MCF 10A (cell line): ENCODE measurements at regions of chr1 and their contacts with region 1.

Region 1: GRCh38 chr1:78617615-78618026 is 2.6 kb upstream of the IFI44L start:
- DNase-seq: peak; percentile 88
- H3K4me3 Mint-ChIP-seq: no peak overlapping the region
- H3K27ac Mint-ChIP-seq: no peak overlapping the region
- H3K4me1 Mint-ChIP-seq: peaks cover 22% of the 10 kb centered on the region
- H3K27me3 Mint-ChIP-seq: no peaks in the 10 kb centered on the region
- CTCF ChIP-seq: peak; percentile 82

Region 2: GRCh38 chr1:78132174-78132947 is 485.3 kb before region 1 on chr1:
- CTCF ChIA-PET with region 1: interaction called, 12 read pairs
- POLR2A ChIA-PET with region 1: interaction called, 7 read pairs
- intact Hi-C with region 1: no loop called
- DNase-seq: no peak
- H3K4me3 Mint-ChIP-seq: no peak overlapping the region
- H3K27ac Mint-ChIP-seq: no peak overlapping the region
- H3K4me1 Mint-ChIP-seq: no peaks in the 10 kb centered on the region
- H3K27me3 Mint-ChIP-seq: no peaks in the 10 kb centered on the region
- CTCF ChIP-seq: no peak

Region 3: GRCh38 chr1:78649628-78650027 is 32.0 kb after region 1 on chr1 and contains the start of gene IFI44:
- CTCF ChIA-PET with region 1: interaction called, 3 read pairs
- POLR2A ChIA-PET with region 1: interaction called, 19 read pairs
- intact Hi-C with region 1: no loop called
- DNase-seq: peak; percentile 81
- H3K4me3 Mint-ChIP-seq: no peak within 1 kb of the TSS
- H3K27ac Mint-ChIP-seq: no peak within 1 kb of the TSS
- H3K4me1 Mint-ChIP-seq: no peaks in the 10 kb centered on the region
- H3K27me3 Mint-ChIP-seq: no peaks in the 10 kb centered on the region
- CTCF ChIP-seq: no peak
- total RNA-seq, gene IFI44: 7.5 and 7.7 TPM in 2 replicates

Region 4: DNA sequence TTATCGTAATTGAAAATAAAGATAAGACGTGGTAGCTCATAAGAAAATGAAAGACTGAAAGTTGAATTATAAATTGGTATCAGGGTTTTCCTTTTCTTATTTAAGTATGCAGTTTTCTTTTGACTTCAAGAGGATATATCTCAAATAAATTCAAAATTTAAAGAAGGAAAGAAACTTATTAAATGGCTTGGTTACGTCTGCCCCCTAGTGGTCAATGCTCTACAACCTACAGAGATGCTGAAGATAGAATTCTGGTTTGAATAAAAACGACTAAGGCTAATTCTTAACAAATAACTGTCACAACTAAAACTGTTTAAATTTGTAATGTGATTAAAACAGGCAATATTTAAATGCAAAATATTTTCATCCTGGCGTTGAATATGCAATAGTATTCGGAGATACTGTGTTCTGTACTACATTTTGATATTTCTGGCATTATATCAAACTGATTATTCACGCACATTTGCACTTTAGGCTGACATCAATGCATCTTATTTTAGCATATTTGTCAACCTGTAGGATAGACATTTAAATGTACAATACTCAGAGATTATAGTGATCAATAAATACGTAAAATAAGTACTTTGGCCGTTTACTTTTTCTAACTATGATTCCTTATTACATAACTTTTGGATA is 58.8 kb after region 1 on chr1:
- CTCF ChIA-PET with region 1: interaction called, 56 read pairs
- POLR2A ChIA-PET with region 1: interaction called, 21 read pairs
- intact Hi-C with region 1: loop called (anchors 1 kb)
- DNase-seq: peak; percentile 76
- H3K4me3 Mint-ChIP-seq: no peak overlapping the region
- H3K27ac Mint-ChIP-seq: no peak overlapping the region
- H3K4me1 Mint-ChIP-seq: no peaks in the 10 kb centered on the region
- H3K27me3 Mint-ChIP-seq: no peaks in the 10 kb centered on the region
- CTCF ChIP-seq: peak; percentile 71

Region 5: DNA sequence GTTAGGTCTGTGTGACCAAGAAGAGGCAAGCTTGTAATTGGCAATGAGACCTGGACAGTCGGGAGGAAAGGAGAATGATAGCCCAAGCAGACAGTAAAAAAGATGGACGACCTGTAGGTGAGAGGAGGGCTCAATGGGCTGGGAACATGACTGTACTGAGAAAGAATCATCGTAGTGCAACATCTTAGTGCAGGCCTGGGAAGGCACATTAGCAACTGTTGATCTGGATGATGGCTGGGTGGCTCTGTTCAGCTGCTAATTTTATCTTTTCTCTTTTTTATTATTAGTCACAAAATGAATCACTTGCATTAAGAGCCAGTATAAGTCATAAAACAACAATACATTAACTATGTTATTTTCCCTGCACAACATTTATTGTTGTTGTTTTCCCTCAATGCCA is 64.9 kb after region 1 on chr1:
- CTCF ChIA-PET with region 1: interaction called, 29 read pairs
- POLR2A ChIA-PET with region 1: interaction called, 4 read pairs
- intact Hi-C with region 1: no loop called
- DNase-seq: no peak
- H3K4me3 Mint-ChIP-seq: no peak overlapping the region
- H3K27ac Mint-ChIP-seq: no peak overlapping the region
- H3K4me1 Mint-ChIP-seq: no peaks in the 10 kb centered on the region
- H3K27me3 Mint-ChIP-seq: no peaks in the 10 kb centered on the region
- CTCF ChIP-seq: no peak

Region 6: GRCh38 chr1:78831731-78832360 is 214.2 kb after region 1 on chr1:
- CTCF ChIA-PET with region 1: interaction called, 5 read pairs
- POLR2A ChIA-PET with region 1: no interaction called
- intact Hi-C with region 1: loop called (anchors 2 kb)
- DNase-seq: peak; percentile 78
- H3K4me3 Mint-ChIP-seq: no peak overlapping the region
- H3K27ac Mint-ChIP-seq: peak overlapping the region; percentile 78
- H3K4me1 Mint-ChIP-seq: peaks cover 42% of the 10 kb centered on the region
- H3K27me3 Mint-ChIP-seq: no peaks in the 10 kb centered on the region
- CTCF ChIP-seq: no peak

Region 7: DNA sequence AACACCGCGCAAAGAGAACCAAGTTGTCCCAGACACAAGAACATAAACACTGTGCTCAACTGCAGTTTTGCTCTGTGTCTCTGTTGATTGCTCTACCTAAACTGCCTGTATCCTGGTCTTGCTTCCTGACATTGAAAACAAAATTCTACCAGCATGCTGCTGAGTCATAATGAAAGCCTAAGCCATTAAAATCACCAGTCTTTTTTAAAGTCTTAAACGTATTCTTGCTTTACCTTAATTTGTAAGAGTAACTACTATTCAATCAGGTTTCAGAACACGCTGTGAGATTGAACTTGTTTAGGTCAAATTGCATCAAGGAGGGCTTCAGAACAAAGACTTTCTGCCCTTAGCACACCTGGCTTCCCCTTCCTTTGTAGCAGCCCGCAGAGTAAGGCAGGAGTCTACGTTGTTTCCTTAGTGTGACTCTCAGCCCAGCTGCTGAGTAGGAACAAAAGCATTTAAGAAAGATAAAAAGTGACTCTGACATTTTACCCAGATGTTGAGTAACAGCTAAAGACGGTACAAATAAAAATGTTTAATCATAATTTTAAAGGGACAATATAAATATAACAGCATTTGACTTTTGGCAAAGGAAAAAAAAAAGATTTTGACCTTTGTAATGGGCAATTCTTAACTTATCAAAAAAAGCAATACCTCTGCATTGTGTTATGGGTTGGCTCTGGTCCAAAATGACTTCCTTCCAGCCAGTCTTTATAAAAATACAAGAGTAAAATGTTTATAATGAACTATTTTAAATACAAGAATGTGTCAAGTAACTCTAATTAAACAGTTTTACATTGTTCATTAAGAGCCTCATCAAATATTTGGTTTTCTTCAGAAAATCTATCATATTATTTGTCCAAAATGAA is 575.8 kb after region 1 on chr1:
- CTCF ChIA-PET with region 1: interaction called, 3 read pairs
- POLR2A ChIA-PET with region 1: no interaction called
- intact Hi-C with region 1: loop called (anchors 1 kb)
- DNase-seq: peak; percentile 73
- H3K4me3 Mint-ChIP-seq: peak overlapping the region; percentile 52
- H3K27ac Mint-ChIP-seq: peak overlapping the region; percentile 92
- H3K4me1 Mint-ChIP-seq: peaks cover 10% of the 10 kb centered on the region
- H3K27me3 Mint-ChIP-seq: no peaks in the 10 kb centered on the region
- CTCF ChIP-seq: no peak